ENCODE measurements at regions of chr22 and their contacts with region 1.

Region 1: GRCh38 chr22:39520054-39520891 is at the start of gene ATF4:
- DNase-seq: peak; percentile 95 to 98
- ATAC-seq: peak; percentile 83 to 95 (median 90)
- H3K4me3 ChIP-seq: peak within 1 kb of the TSS; percentile 81 to 100 (median 98)
- H3K27ac ChIP-seq: peak within 1 kb of the TSS; percentile 97 to 100 (median 100)
- H3K4me1 ChIP-seq: peaks cover 29 to 54% (median 52%) of the 10 kb centered on the region in 9 donors
- H3K27me3 ChIP-seq: no peaks in the 10 kb centered on the region
- CTCF ChIP-seq: no peak
- total RNA-seq, gene ATF4: 95.2 to 319 (median 133) TPM

Region 2: DNA sequence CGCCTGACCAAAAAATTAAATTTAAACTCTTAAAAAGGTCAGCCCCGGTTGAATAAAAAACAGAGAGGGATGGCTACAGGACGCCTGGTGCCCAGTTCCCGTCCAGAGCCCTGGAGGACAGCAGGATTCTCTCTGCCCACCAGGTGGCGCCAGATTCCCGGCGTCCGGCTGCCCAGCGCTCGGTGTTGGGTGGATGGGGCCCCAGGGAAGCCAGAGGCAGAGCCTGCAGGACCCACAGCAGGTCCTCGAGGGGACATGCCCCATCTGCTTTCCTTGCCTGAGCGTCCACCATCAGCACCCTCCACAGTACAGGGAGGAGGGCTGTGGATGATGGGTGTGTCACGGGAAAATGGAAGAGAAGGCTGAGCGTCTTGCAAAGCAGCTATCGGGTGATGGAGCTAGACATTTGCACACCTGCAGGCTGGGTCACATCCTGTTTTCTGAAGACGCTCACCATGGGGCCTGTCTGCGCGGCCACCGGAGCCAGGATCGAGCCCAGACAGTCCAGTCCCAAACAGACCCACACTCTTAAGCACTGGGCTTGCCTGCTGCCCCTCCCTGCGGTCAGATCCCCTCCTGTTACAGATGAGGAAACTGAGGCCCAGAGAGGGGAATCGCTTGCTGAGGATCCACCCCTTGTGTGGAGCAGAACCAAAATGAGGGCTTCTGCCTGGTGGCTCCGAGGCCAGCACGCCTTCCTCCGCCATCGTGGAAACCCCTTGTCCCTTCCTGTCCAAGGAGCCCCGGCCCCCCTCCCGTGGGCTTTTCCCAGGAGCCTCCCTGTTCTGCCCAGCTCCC is 349.2 kb before region 1 on chr22:
- intact Hi-C with region 1: loop called in 7 of 10 experiments (anchors 5 to 10 kb)
- DNase-seq: peak; percentile 83 to 89
- ATAC-seq: peak; percentile 70 to 86 (median 82)
- H3K4me3 ChIP-seq: peak overlapping the region in 3 of 10 donors; percentile 10 to 23 (median 18)
- H3K27ac ChIP-seq: peak overlapping the region in 6 of 10 donors; percentile 0 to 92 (median 27)
- H3K4me1 ChIP-seq: peaks cover 32 to 57% (median 53%) of the 10 kb centered on the region in 9 donors
- H3K27me3 ChIP-seq: no peaks in the 10 kb centered on the region
- CTCF ChIP-seq: peak; percentile 93 to 97 (median 96)

Region 3: GRCh38 chr22:39343259-39344048 is 176.8 kb before region 1 on chr22:
- intact Hi-C with region 1: loop called in 3 of 10 experiments (anchors 10 kb)
- DNase-seq: peak in 1 of 2 donors; percentile 62
- ATAC-seq: peak; percentile 43 to 84 (median 72)
- H3K4me3 ChIP-seq: no peak overlapping the region
- H3K27ac ChIP-seq: no peak overlapping the region
- H3K4me1 ChIP-seq: peaks cover 0 to 7% (median 0%) of the 10 kb centered on the region in 9 donors
- H3K27me3 ChIP-seq: peaks cover 0 to 15% (median 0%) of the 10 kb centered on the region in 7 donors
- CTCF ChIP-seq: peak; percentile 40 to 82 (median 66)

Region 4: DNA sequence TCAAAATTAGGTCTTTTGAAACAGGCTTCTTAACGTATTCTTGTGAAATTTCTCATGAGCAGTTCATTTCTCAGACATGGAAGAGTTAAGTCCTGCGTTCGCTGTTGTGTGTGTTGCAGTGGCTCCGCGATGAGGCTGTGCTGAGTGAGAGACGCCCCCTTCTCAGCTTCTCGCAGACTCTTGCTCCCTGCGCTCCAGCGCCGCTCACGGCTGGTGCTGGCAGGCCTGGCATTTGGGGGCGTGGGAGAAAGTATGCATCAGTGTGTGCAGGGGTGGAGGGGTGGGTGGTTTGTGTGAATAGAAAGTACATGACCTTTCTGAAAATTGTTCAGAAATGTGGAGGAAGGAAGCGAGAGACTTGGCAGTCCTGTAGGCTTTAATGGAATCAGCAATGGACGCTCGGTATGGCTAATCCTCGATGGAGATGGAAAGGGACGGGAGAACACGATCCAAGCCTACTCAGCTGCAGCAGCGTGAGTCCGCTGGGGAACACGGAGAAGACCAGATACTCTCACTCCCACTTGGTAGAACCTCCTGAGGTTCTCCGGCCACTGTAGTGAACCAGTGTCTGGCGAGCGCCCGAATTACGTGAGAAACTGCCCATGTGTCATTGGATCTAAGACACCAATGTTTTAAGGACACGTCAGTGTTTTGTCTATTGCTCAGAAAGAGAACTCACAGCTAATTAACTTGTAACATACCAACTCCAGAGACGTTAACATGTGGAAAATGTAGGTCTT is 114.8 kb before region 1 on chr22:
- intact Hi-C with region 1: loop called in 3 of 10 experiments (anchors 5 to 10 kb)
- DNase-seq: no peak
- ATAC-seq: peak in 6 of 8 donors; percentile 47 to 66 (median 59)
- H3K4me3 ChIP-seq: peak overlapping the region in 4 of 10 donors; percentile 5 to 33 (median 20)
- H3K27ac ChIP-seq: peak overlapping the region in 4 of 10 donors; percentile 32 to 41 (median 37)
- H3K4me1 ChIP-seq: peaks cover 0 to 48% (median 20%) of the 10 kb centered on the region in 9 donors
- H3K27me3 ChIP-seq: no peaks in the 10 kb centered on the region
- CTCF ChIP-seq: peak in 1 of 9 donors; percentile 11

Region 5: GRCh38 chr22:39502109-39502788 is 18.0 kb before region 1 on chr22 and contains the start of gene MIEF1:
- intact Hi-C with region 1: loop called in 4 of 10 experiments (anchors 1 to 2 kb)
- DNase-seq: peak; percentile 98
- ATAC-seq: peak; percentile 95 to 98 (median 98)
- H3K4me3 ChIP-seq: peak within 1 kb of the TSS; percentile 73 to 99 (median 92)
- H3K27ac ChIP-seq: peak within 1 kb of the TSS; percentile 42 to 94 (median 91)
- H3K4me1 ChIP-seq: peaks cover 26 to 76% (median 54%) of the 10 kb centered on the region in 9 donors
- H3K27me3 ChIP-seq: no peaks in the 10 kb centered on the region
- CTCF ChIP-seq: peak in 1 of 9 donors; percentile 17
- total RNA-seq, gene MIEF1: 12.8 to 35.8 (median 17.5) TPM

Region 6: DNA sequence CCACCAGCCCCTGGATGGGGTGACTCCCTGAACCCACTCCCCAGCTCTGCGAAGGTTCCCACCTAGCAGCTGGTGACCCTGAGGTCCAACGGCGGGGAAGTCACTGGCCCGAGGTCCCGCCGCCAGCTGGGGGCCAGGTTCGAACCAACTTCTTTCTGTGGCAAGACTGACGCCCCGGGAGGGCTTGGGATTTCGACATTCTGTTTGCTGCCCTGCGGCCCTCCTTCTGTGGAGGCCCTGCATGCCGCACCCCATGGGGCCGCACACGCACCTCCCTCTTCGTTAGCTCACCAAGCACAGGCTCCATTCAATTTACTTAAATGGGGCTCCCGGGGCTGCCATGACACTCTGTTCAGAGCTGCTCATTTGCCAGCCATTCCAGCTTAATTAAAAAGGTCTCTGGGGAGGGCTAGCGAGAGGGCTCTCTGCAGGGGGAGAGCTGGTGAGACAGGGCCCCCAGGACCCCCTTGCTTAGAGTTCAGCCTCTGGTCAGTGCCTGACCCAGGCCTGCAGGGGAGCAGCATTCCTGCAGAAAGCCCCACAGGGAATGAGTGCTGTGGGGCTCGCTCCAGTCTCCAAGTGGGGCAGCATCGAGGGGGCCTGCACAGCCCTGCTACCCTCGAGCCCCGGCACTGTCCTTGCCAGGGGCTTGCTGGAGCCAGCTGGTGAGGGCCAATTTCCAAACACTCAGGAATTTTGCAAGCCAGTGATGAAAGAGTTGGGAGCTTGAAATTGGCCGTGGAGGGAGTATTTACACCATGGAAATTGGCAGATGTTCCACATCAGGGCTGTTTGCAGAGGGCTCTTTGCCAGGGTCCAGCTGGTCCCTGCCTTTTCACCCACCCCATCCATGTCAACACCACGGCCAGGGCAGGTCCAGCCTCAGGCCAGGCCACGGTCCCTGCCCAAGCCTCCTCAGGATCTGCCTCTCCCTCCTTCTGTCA is 131.1 kb after region 1 on chr22:
- intact Hi-C with region 1: no loop called
- DNase-seq: no peak
- ATAC-seq: peak in 1 of 8 donors; percentile 47
- H3K4me3 ChIP-seq: no peak overlapping the region
- H3K27ac ChIP-seq: no peak overlapping the region
- H3K4me1 ChIP-seq: no peaks in the 10 kb centered on the region
- H3K27me3 ChIP-seq: peaks cover 0 to 29% (median 16%) of the 10 kb centered on the region in 7 donors
- CTCF ChIP-seq: no peak

Measured in heart right ventricle (tissue), 16 donors.